Aorta (tissue), 5 donors: ENCODE measurements at regions of chr2 and their contacts with region 1.

Region 1: DNA sequence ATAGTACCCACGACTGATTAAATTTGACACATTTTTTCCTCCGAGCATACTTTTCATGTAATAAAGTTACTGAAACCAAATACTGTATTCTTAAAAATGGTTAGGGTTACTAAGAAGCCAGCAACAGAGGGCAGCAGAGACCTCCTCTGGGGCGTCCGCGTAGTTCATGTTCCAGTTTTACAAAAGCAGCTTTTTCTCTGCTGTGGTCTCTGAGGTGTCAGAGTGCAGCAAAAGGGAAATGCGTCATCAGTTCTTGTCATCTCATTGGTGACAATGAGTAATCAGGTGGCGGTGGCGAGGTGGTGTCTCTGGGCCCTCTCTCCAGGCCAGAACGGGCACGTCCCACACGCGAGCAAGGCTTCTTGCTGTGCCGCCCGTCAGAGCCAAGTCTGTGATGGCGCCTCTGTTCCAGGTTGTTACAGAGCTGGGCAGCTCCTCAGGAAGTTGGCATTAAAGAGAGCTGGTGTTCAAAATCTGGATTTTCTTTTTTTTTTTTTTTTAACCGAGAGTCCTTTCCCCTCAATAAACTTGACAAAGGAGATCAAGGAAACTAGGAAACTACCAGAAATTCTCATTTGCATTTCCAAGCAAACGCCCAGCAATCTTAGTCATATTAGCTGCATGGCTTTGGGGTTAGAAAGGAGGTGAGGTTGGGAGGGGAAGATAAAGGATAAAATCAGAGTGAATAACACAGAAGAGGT is 98.6 kb upstream of the BZW1 start:
- DNase-seq: peak; percentile 92 to 95
- ATAC-seq: peak; percentile 98
- H3K4me3 ChIP-seq: peak overlapping the region; percentile 12 to 63
- H3K27ac ChIP-seq: peak overlapping the region; percentile 15 to 91
- H3K4me1 ChIP-seq: no peaks in the 10 kb centered on the region
- H3K27me3 ChIP-seq: no peaks in the 10 kb centered on the region

Region 2: GRCh38 chr2:200567932-200568331 is 145.2 kb before region 1 on chr2:
- intact Hi-C with region 1: no loop called
- DNase-seq: no peak
- ATAC-seq: no peak
- H3K4me3 ChIP-seq: no peak overlapping the region
- H3K27ac ChIP-seq: no peak overlapping the region
- H3K4me1 ChIP-seq: no peaks in the 10 kb centered on the region
- H3K27me3 ChIP-seq: no peaks in the 10 kb centered on the region

Region 3: GRCh38 chr2:200735061-200735460 is 21.9 kb after region 1 on chr2:
- intact Hi-C with region 1: loop called in 1 of 2 experiments (anchors 1 kb)
- DNase-seq: no peak
- ATAC-seq: no peak
- H3K4me3 ChIP-seq: no peak overlapping the region
- H3K27ac ChIP-seq: no peak overlapping the region
- H3K4me1 ChIP-seq: peaks cover 0 to 5% of the 10 kb centered on the region in 2 donors
- H3K27me3 ChIP-seq: no peaks in the 10 kb centered on the region

Region 4: GRCh38 chr2:200811336-200812121 is 98.4 kb after region 1 on chr2 and contains the start of gene BZW1:
- intact Hi-C with region 1: loop called (anchors 2 kb)
- DNase-seq: peak; percentile 97 to 99
- ATAC-seq: peak; percentile 98
- H3K4me3 ChIP-seq: peak within 1 kb of the TSS; percentile 85 to 91
- H3K27ac ChIP-seq: peak within 1 kb of the TSS; percentile 83 to 97
- H3K4me1 ChIP-seq: no peaks in the 10 kb centered on the region
- H3K27me3 ChIP-seq: no peaks in the 10 kb centered on the region
- total RNA-seq, gene BZW1: 193 to 250 TPM

Region 5: DNA sequence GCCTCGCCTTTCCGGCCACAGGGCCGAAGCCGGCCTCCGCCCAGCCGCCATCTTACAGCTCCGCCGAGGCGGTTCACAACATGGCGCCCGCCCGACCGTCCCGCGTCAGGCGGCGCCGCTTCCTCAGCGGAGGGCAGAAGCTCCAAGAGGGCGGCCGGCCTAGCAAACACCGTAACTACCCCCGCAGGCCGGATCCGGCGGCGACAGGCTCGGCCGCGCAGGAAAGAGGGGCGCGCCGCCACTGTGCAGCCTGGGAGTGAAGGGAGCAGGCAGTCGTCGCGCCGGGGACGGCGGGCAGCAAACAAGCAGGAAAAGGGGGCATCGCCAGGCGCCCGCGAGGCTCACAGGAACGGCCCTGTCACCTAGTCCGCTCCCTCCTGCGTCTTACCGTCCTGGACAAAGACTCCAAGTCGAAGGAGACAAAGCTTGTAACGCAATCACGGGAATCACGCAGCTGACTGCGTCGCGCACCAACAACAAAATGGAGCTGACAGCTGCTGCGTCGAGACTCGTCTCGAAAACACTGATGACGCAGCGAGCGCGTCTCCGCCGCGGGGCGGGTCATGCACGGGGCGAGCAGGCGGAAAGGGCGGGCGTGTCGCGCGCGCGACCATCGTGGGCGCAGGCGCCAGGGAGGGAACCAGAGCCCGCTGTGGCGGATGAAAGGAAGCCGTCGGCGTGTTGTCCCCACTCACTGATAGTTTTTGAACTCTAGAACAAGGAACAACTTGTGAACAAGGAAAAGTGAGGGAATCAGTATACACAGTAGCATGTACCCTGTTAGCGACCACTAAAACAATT is 151.2 kb after region 1 on chr2 and contains the start of gene CLK1:
- intact Hi-C with region 1: loop called (anchors 5 kb)
- DNase-seq: peak; percentile 99 to 100
- ATAC-seq: peak; percentile 96
- H3K4me3 ChIP-seq: peak within 1 kb of the TSS; percentile 80 to 95
- H3K27ac ChIP-seq: peak within 1 kb of the TSS; percentile 99 to 100
- H3K4me1 ChIP-seq: no peaks in the 10 kb centered on the region
- H3K27me3 ChIP-seq: no peaks in the 10 kb centered on the region
- total RNA-seq, gene CLK1: 167 to 197 TPM

Region 6: GRCh38 chr2:200888704-200889625 is 175.8 kb after region 1 on chr2 and contains the starts of genes NIF3L1 and PPIL3:
- intact Hi-C with region 1: loop called in 1 of 2 experiments (anchors 1 kb)
- DNase-seq: peak; percentile 98 to 99
- ATAC-seq: peak; percentile 97
- H3K4me3 ChIP-seq: peak within 1 kb of the TSS; percentile 81 to 93
- H3K27ac ChIP-seq: peak within 1 kb of the TSS; percentile 36 to 98
- H3K4me1 ChIP-seq: peaks cover 0 to 2% of the 10 kb centered on the region in 2 donors
- H3K27me3 ChIP-seq: no peaks in the 10 kb centered on the region
- total RNA-seq, gene NIF3L1: 13.6 to 15.8 TPM
- total RNA-seq, gene PPIL3: 17.8 to 33.7 TPM

Region 7: GRCh38 chr2:200963124-200963917 is 250.2 kb after region 1 on chr2 and contains the start of gene ORC2:
- intact Hi-C with region 1: loop called in 1 of 2 experiments (anchors 10 kb)
- DNase-seq: peak; percentile 96 to 97
- ATAC-seq: peak; percentile 99
- H3K4me3 ChIP-seq: peak within 1 kb of the TSS; percentile 87 to 91
- H3K27ac ChIP-seq: peak within 1 kb of the TSS in 1 of 2 donors; percentile 66
- H3K4me1 ChIP-seq: peaks cover 0 to 8% of the 10 kb centered on the region in 2 donors
- H3K27me3 ChIP-seq: no peaks in the 10 kb centered on the region
- total RNA-seq, gene ORC2: 28.8 to 35.6 TPM